ENCODE measurements at regions of chr5 and their contacts with region 1.

Region 1: DNA sequence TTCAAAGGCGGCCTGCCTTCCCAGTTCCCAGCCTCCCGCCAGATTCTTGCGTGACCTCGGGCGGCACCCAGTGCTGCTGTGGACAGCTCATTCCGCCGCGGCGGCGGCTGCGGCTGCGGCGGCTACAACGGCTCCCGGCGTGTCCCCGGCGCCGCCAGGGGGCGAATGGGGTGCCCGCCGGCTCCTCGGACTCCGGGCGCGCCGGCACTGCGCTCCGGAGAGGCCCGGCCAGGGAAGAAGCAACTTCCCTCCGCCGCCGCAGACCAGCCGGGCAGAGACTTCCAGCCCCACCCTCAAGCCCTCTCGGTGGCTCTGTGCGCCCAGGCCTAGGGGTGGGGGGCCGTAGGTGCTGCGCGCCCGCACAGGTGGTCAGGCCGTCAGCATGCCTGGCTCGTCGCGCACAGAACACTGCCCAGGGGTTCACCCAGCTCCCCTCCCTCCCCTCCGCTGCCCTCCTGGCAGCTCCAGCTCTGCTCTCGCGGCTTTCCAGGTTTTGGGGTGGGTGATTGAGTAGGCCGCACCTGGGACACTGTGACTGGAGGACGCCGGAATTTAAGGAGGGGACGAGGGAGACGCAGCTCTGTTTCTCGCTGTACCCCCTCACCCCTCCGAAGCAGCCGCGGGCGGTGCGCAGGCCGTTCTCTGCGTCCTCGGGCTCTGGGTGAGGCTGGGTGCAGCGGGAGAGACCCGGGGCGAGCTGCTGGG is 20.2 kb downstream of the IGIP start:
- DNase-seq: peak; percentile 90
- H3K4me3 ChIP-seq: peak overlapping the region; percentile 32 to 43
- H3K27ac ChIP-seq: no peak overlapping the region
- H3K4me1 ChIP-seq: peaks cover 0 to 8% of the 10 kb centered on the region in 2 experiments; a peak in 1 of 4 replicates
- H3K27me3 ChIP-seq: no peaks in the 10 kb centered on the region
- CTCF ChIP-seq: peak; percentile 67
- EP300 ChIP-seq: peak in 1 of 2 experiments; percentile 44; a peak in 1 of 4 replicates
- RAD21 ChIP-seq: peak; percentile 32; the same call in 1 of the 2 replicates

Region 2: GRCh38 chr5:140081030-140081429 is 64.9 kb before region 1 on chr5:
- CTCF ChIA-PET with region 1: interaction called, 147 read pairs
- POLR2A ChIA-PET with region 1: no interaction called
- DNase-seq: no peak
- H3K4me3 ChIP-seq: no peak overlapping the region
- H3K27ac ChIP-seq: no peak overlapping the region
- H3K4me1 ChIP-seq: no peaks in the 10 kb centered on the region
- H3K27me3 ChIP-seq: peaks cover 12% of the 10 kb centered on the region; the same call in 1 of the 2 replicates
- CTCF ChIP-seq: no peak
- EP300 ChIP-seq: no peak
- RAD21 ChIP-seq: no peak

Region 3: GRCh38 chr5:140126315-140127012 is 19.5 kb before region 1 on chr5:
- CTCF ChIA-PET with region 1: interaction called, 166 read pairs
- POLR2A ChIA-PET with region 1: no interaction called
- DNase-seq: no peak
- H3K4me3 ChIP-seq: no peak overlapping the region
- H3K27ac ChIP-seq: no peak overlapping the region
- H3K4me1 ChIP-seq: peaks cover 0 to 17% of the 10 kb centered on the region in 2 experiments; a peak in 2 of 4 replicates
- H3K27me3 ChIP-seq: no peaks in the 10 kb centered on the region
- CTCF ChIP-seq: no peak
- EP300 ChIP-seq: no peak
- RAD21 ChIP-seq: no peak

Region 4: GRCh38 chr5:140157032-140157803 is 11.2 kb after region 1 on chr5:
- CTCF ChIA-PET with region 1: interaction called, 120 read pairs
- POLR2A ChIA-PET with region 1: no interaction called
- DNase-seq: peak; percentile 92
- H3K4me3 ChIP-seq: peak overlapping the region; percentile 35 to 46
- H3K27ac ChIP-seq: no peak overlapping the region; a peak in 1 of 4 replicates
- H3K4me1 ChIP-seq: peaks cover 0 to 5% of the 10 kb centered on the region in 2 experiments; a peak in 1 of 4 replicates
- H3K27me3 ChIP-seq: no peaks in the 10 kb centered on the region
- CTCF ChIP-seq: peak; percentile 92
- EP300 ChIP-seq: no peak
- RAD21 ChIP-seq: peak; percentile 94

Region 5: DNA sequence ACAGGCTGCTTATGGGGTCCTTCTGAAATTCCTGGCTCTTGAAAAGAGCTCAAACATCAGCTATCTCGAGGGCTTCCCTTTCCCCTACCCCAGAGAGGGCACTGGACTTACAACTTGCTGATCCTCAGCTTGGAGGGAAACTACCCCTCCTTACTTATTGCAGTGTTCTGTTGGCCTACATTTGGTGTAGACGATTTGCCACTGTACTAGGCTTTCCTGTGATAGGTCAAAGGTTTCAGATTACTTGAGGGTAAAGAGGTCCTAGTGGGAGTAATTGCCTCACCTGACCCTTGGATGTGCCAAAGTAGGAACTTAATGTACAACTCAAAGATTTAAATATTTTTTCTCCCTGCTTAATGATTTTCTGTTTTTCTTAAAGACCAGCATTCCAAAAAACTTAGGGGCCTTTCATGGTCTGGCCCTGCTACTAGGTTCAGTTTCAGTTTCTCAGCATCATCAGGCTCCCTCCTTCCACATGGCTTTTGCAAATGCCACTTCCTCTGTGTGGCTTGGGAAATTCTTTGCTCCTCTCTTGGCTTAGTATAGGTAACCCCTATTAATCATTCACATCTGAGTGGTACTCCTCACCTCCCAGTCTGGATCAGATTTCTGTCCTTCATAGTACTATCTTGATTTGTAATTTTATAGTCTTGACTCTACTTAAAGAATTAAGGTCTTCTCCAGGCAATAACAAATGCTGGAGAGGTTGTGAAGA is 61.4 kb after region 1 on chr5:
- CTCF ChIA-PET with region 1: no interaction called
- POLR2A ChIA-PET with region 1: no interaction called
- DNase-seq: no peak
- H3K4me3 ChIP-seq: no peak overlapping the region
- H3K27ac ChIP-seq: no peak overlapping the region
- H3K4me1 ChIP-seq: no peaks in the 10 kb centered on the region; a peak in 1 of 4 replicates
- H3K27me3 ChIP-seq: no peaks in the 10 kb centered on the region
- CTCF ChIP-seq: no peak
- EP300 ChIP-seq: no peak
- RAD21 ChIP-seq: no peak

Region 6: GRCh38 chr5:140401362-140402257 is 255.6 kb after region 1 on chr5 and contains the start of gene ANKHD1:
- CTCF ChIA-PET with region 1: no interaction called
- POLR2A ChIA-PET with region 1: no interaction called
- DNase-seq: peak; percentile 91
- H3K4me3 ChIP-seq: peak within 1 kb of the TSS; percentile 85 to 98
- H3K27ac ChIP-seq: peak within 1 kb of the TSS; percentile 88 to 95
- H3K4me1 ChIP-seq: peaks cover 0 to 4% of the 10 kb centered on the region in 2 experiments; a peak in 1 of 4 replicates
- H3K27me3 ChIP-seq: no peaks in the 10 kb centered on the region
- CTCF ChIP-seq: no peak
- EP300 ChIP-seq: no peak
- RAD21 ChIP-seq: no peak
- polyA plus RNA-seq, gene ANKHD1: 26.7 and 36.4 TPM in 2 replicates

Region 7: GRCh38 chr5:140565024-140565779 is 419.2 kb after region 1 on chr5:
- CTCF ChIA-PET with region 1: no interaction called
- POLR2A ChIA-PET with region 1: no interaction called
- DNase-seq: no peak
- H3K4me3 ChIP-seq: peak overlapping the region; percentile 85 to 97
- H3K27ac ChIP-seq: peak overlapping the region; percentile 82 to 90
- H3K4me1 ChIP-seq: peaks cover 3 to 20% of the 10 kb centered on the region in 2 experiments; a peak in 1 of 4 replicates
- H3K27me3 ChIP-seq: no peaks in the 10 kb centered on the region
- CTCF ChIP-seq: no peak
- EP300 ChIP-seq: no peak
- RAD21 ChIP-seq: no peak

Region 8: GRCh38 chr5:140916349-140916748 is 770.4 kb after region 1 on chr5:
- CTCF ChIA-PET with region 1: no interaction called
- POLR2A ChIA-PET with region 1: no interaction called
- DNase-seq: no peak
- H3K4me3 ChIP-seq: no peak overlapping the region
- H3K27ac ChIP-seq: no peak overlapping the region
- H3K4me1 ChIP-seq: no peaks in the 10 kb centered on the region
- H3K27me3 ChIP-seq: no peaks in the 10 kb centered on the region
- CTCF ChIP-seq: no peak
- EP300 ChIP-seq: no peak
- RAD21 ChIP-seq: no peak

Measured in SK-N-SH (cell line).